ENCODE measurements at regions of chr19 and their contacts with region 1.

Region 1: GRCh38 chr19:47243776-47244547 is 12.4 kb upstream of the CCDC9 start:
- DNase-seq: peak; percentile 93
- ATAC-seq: peak; percentile 71
- H3K4me3 ChIP-seq: peak overlapping the region in 4 of 5 experiments; percentile 12 to 27 (median 14)
- H3K4me3 Mint-ChIP-seq: peak overlapping the region; percentile 64
- H3K27ac ChIP-seq: no peak overlapping the region
- H3K27ac Mint-ChIP-seq: peak overlapping the region; percentile 68
- H3K4me1 ChIP-seq: peaks cover 50% of the 10 kb centered on the region in 2 donors
- H3K4me1 Mint-ChIP-seq: peaks cover 32% of the 10 kb centered on the region
- H3K27me3 ChIP-seq: peaks cover 0 to 55% (median 23%) of the 10 kb centered on the region in 4 experiments
- H3K27me3 Mint-ChIP-seq: peaks cover 17% of the 10 kb centered on the region
- CTCF ChIP-seq: peak; percentile 98

Region 2: GRCh38 chr19:46944918-46945628 is 298.9 kb before region 1 on chr19:
- CTCF ChIA-PET with region 1: no interaction called
- POLR2A ChIA-PET with region 1: no interaction called
- intact Hi-C with region 1: no loop called
- DNase-seq: no peak
- ATAC-seq: no peak
- H3K4me3 ChIP-seq: no peak overlapping the region
- H3K4me3 Mint-ChIP-seq: no peak overlapping the region
- H3K27ac ChIP-seq: no peak overlapping the region
- H3K27ac Mint-ChIP-seq: no peak overlapping the region
- H3K4me1 ChIP-seq: no peaks in the 10 kb centered on the region
- H3K4me1 Mint-ChIP-seq: peaks cover 1% of the 10 kb centered on the region
- H3K27me3 ChIP-seq: no peaks in the 10 kb centered on the region
- H3K27me3 Mint-ChIP-seq: no peaks in the 10 kb centered on the region
- CTCF ChIP-seq: no peak

Region 3: DNA sequence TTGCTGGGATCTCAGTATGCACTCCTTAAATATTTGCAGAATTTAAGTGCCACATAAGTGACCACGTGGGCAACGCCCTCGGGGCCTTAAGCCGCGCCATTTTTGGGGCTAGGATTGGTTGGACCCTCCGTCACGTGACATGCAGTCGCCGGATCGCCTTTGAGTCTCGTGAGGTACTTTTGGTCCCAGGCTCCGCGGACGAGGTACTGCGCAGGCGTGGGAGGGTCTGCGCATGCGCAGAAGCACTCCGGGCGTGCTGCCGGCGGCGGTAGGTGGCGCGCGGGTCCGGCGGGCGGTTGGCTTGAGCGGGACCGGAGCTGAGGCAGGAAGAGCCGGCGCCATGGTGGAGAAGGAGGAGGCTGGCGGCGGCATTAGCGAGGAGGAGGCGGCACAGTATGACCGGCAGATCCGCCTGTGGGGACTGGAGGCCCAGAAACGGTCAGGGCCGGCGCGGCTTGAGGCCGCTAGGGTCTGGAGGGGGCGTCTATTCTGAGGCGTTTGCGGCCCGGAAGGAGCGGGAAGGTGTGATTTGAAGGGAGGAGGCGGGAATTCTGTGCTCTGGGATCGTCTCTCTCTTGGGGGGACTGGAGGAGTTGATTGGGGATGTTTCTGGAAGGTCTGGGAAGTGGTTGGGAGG is 113.3 kb before region 1 on chr19 and contains the start of gene SAE1:
- CTCF ChIA-PET with region 1: interaction called, 32 read pairs
- POLR2A ChIA-PET with region 1: no interaction called
- intact Hi-C with region 1: loop called (anchors 5 kb)
- DNase-seq: peak; percentile 97
- ATAC-seq: peak; percentile 89
- H3K4me3 ChIP-seq: peak within 1 kb of the TSS; percentile 50 to 98 (median 88)
- H3K4me3 Mint-ChIP-seq: peak within 1 kb of the TSS; percentile 97
- H3K27ac ChIP-seq: peak within 1 kb of the TSS; percentile 76 to 89
- H3K27ac Mint-ChIP-seq: peak within 1 kb of the TSS; percentile 98
- H3K4me1 ChIP-seq: peaks cover 0 to 21% of the 10 kb centered on the region in 2 donors
- H3K4me1 Mint-ChIP-seq: peaks cover 39% of the 10 kb centered on the region
- H3K27me3 ChIP-seq: no peaks in the 10 kb centered on the region
- H3K27me3 Mint-ChIP-seq: no peaks in the 10 kb centered on the region
- CTCF ChIP-seq: peak; percentile 65
- total RNA-seq, gene SAE1: 41.0 and 45.1 TPM in 2 replicates

Region 4: GRCh38 chr19:47157431-47158321 is 86.3 kb before region 1 on chr19:
- CTCF ChIA-PET with region 1: interaction called, 15 read pairs
- POLR2A ChIA-PET with region 1: interaction called, 7 read pairs
- intact Hi-C with region 1: no loop called
- DNase-seq: peak; percentile 63
- ATAC-seq: peak; percentile 53
- H3K4me3 ChIP-seq: peak overlapping the region in 3 of 5 experiments; percentile 5 to 31 (median 15)
- H3K4me3 Mint-ChIP-seq: peak overlapping the region; percentile 66
- H3K27ac ChIP-seq: peak overlapping the region; percentile 37 to 55
- H3K27ac Mint-ChIP-seq: peak overlapping the region; percentile 90
- H3K4me1 ChIP-seq: peaks cover 24 to 28% of the 10 kb centered on the region in 2 donors
- H3K4me1 Mint-ChIP-seq: peaks cover 27% of the 10 kb centered on the region
- H3K27me3 ChIP-seq: no peaks in the 10 kb centered on the region
- H3K27me3 Mint-ChIP-seq: no peaks in the 10 kb centered on the region
- CTCF ChIP-seq: no peak

Region 5: GRCh38 chr19:47231215-47231984 is 12.6 kb before region 1 on chr19:
- CTCF ChIA-PET with region 1: interaction called, 99 read pairs
- POLR2A ChIA-PET with region 1: interaction called, 31 read pairs
- intact Hi-C with region 1: loop called (anchors 1 kb)
- DNase-seq: peak; percentile 91
- ATAC-seq: peak; percentile 65
- H3K4me3 ChIP-seq: peak overlapping the region; percentile 35 to 95 (median 53)
- H3K4me3 Mint-ChIP-seq: peak overlapping the region; percentile 81
- H3K27ac ChIP-seq: peak overlapping the region in 1 of 2 donors; percentile 45
- H3K27ac Mint-ChIP-seq: peak overlapping the region; percentile 59
- H3K4me1 ChIP-seq: peaks cover 46 to 54% of the 10 kb centered on the region in 2 donors
- H3K4me1 Mint-ChIP-seq: peaks cover 26% of the 10 kb centered on the region
- H3K27me3 ChIP-seq: peaks cover 0 to 37% (median 1%) of the 10 kb centered on the region in 4 experiments
- H3K27me3 Mint-ChIP-seq: no peaks in the 10 kb centered on the region
- CTCF ChIP-seq: no peak

Region 6: DNA sequence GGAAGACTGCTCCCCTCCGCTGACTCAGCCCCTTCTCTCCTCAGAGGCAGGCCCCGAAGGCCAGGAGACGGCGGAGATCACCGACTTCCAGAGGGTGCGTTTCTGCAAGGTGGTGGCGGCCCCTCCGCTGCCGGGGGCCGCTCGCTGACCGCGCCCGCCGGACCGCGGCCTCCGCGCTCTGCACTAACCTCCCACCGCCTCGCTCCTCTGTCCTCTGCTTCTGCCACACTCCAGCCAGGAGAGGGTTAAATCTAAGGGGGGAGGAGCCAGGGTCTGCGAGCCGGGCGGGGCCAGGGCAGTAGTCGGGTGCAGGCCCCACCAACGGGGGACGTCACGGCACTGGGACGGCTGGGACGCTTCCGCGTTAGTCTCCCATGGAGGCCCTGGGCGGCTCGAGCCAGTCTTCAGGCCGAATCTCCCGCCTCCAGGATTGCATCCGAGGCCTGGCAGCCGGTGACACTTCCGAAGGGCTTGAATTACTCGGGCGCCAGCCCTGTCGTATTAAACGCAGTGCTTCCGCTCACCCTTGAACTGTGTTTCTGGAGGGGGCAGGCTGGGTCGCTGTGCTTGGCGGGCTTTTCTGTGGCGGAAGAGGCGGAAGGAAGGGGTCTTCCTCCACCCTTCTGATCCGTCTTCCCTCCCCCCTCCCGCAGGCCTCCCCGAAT is 29.5 kb after region 1 on chr19:
- CTCF ChIA-PET with region 1: interaction called, 16 read pairs
- POLR2A ChIA-PET with region 1: interaction called, 4 read pairs
- intact Hi-C with region 1: no loop called
- DNase-seq: peak; percentile 91
- ATAC-seq: peak; percentile 56
- H3K4me3 ChIP-seq: peak overlapping the region; percentile 54 to 99 (median 96)
- H3K4me3 Mint-ChIP-seq: peak overlapping the region; percentile 97
- H3K27ac ChIP-seq: peak overlapping the region; percentile 94 to 98
- H3K27ac Mint-ChIP-seq: peak overlapping the region; percentile 99
- H3K4me1 ChIP-seq: peaks cover 12 to 22% of the 10 kb centered on the region in 2 donors
- H3K4me1 Mint-ChIP-seq: peaks cover 22% of the 10 kb centered on the region
- H3K27me3 ChIP-seq: no peaks in the 10 kb centered on the region
- H3K27me3 Mint-ChIP-seq: no peaks in the 10 kb centered on the region
- CTCF ChIP-seq: no peak

Region 7: DNA sequence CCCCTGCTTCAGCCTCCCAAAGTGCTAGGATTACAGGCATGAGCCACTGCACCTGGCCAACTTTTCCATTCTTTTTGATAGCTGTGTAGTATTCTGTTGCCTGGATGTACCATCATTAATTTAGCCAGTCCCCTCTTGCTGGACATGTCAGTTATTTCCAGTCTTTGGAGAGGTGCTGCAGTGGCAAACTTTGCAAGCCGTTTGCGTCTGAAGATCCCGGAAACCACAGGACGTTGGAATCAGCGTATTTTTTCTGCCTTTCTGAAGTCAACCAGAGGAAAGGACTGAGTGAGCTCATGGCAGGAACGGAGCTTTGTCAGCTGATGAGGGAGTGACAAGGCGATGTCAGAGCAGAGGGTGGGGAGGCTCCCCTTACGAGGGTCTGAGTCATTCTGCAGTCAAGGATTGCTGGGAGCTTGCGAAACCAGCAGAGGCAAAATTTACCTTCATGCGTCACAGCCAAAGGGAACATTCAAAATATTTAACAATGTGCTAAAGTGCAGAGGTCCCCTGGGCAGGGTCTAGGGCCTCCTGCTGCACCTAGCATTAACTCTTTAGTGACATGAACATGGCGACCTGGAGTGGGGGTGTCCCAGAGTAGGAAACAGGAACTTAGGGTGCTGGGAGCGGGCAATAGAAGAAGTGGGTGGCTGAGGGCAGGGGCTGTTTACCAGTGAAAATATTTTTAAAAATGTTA is 71.3 kb after region 1 on chr19:
- CTCF ChIA-PET with region 1: no interaction called
- POLR2A ChIA-PET with region 1: no interaction called
- intact Hi-C with region 1: no loop called
- DNase-seq: no peak
- ATAC-seq: no peak
- H3K4me3 ChIP-seq: peak overlapping the region in 1 of 5 experiments; percentile 36
- H3K4me3 Mint-ChIP-seq: no peak overlapping the region
- H3K27ac ChIP-seq: no peak overlapping the region
- H3K27ac Mint-ChIP-seq: no peak overlapping the region
- H3K4me1 ChIP-seq: no peaks in the 10 kb centered on the region
- H3K4me1 Mint-ChIP-seq: no peaks in the 10 kb centered on the region
- H3K27me3 ChIP-seq: peaks cover 0 to 18% (median 1%) of the 10 kb centered on the region in 4 experiments
- H3K27me3 Mint-ChIP-seq: peaks cover 18% of the 10 kb centered on the region
- CTCF ChIP-seq: no peak